GM23248 (cell line): ENCODE measurements at regions of chr7 and their contacts with region 1.

Region 1: GRCh38 chr7:18345641-18346234 is 149.8 kb upstream of the HDAC9 start:
- DNase-seq: peak; percentile 69
- H3K4me3 ChIP-seq: no peak overlapping the region
- H3K27ac ChIP-seq: no peak overlapping the region
- H3K4me1 ChIP-seq: no peaks in the 10 kb centered on the region
- H3K27me3 ChIP-seq: no peaks in the 10 kb centered on the region

Region 2: GRCh38 chr7:17769918-17770317 is 575.8 kb before region 1 on chr7:
- in situ Hi-C with region 1: loop called (anchors 25 kb)
- DNase-seq: peak; percentile 78
- H3K4me3 ChIP-seq: no peak overlapping the region
- H3K27ac ChIP-seq: no peak overlapping the region
- H3K4me1 ChIP-seq: peaks cover 21% of the 10 kb centered on the region
- H3K27me3 ChIP-seq: no peaks in the 10 kb centered on the region

Region 3: DNA sequence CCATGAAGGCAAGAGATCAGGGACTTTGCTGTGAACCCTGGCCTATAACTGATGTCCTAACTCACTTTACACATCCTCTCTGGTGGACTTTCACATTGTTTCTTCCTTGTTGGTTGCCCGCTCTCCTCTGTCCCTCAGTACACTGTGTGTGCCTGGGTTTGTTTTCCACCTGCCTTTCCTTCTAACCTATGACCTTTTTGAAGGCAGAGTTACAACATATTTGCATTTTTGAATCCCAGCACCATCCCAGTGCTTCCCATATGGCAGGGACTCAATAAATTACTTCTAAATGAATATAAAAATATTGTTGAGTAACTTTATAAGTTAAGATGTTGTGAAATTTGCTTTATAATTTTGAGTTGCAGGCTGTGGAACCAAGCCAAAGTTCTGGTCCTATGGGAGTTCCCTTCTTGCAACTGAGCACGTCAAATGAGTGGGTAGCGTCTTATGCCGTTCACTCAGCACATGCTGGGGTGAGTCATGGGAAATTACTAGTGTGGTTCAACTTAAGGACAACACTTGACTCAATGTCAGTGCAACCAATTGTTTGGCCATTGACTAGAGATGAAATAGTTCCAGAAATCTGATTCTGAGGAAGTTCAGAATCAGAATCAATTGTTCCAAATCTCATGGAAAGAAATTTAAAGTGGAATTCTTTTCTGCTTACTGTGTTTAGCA is 520.8 kb after region 1 on chr7:
- in situ Hi-C with region 1: no loop called
- DNase-seq: peak; percentile 100
- H3K4me3 ChIP-seq: no peak overlapping the region
- H3K27ac ChIP-seq: peak overlapping the region; percentile 74
- H3K4me1 ChIP-seq: peaks cover 20% of the 10 kb centered on the region
- H3K27me3 ChIP-seq: no peaks in the 10 kb centered on the region

Region 4: DNA sequence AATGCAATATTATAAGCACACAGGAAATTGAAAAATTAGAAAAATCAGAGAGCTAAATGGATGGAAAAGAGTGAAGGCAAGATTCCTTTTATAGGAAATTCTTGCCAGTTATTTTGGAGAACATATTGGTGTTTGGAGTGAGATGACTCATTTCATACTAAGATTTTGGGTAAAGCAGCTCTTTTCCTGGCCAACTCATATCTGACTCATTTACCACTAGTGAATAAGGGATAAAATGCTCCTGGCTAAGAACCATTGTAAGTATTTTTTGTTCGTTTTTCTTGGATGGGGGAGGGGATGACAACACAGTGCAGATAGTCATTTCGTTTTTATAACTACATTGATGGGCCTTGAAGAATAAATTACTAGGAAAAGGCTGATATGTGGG is 632.4 kb after region 1 on chr7:
- in situ Hi-C with region 1: no loop called
- DNase-seq: peak; percentile 95
- H3K4me3 ChIP-seq: peak overlapping the region; percentile 55
- H3K27ac ChIP-seq: peak overlapping the region; percentile 62
- H3K4me1 ChIP-seq: peaks cover 38% of the 10 kb centered on the region
- H3K27me3 ChIP-seq: no peaks in the 10 kb centered on the region